Stomach (tissue), 19 donors: ENCODE measurements at regions of chr2 and their contacts with region 1.

Region 1: DNA sequence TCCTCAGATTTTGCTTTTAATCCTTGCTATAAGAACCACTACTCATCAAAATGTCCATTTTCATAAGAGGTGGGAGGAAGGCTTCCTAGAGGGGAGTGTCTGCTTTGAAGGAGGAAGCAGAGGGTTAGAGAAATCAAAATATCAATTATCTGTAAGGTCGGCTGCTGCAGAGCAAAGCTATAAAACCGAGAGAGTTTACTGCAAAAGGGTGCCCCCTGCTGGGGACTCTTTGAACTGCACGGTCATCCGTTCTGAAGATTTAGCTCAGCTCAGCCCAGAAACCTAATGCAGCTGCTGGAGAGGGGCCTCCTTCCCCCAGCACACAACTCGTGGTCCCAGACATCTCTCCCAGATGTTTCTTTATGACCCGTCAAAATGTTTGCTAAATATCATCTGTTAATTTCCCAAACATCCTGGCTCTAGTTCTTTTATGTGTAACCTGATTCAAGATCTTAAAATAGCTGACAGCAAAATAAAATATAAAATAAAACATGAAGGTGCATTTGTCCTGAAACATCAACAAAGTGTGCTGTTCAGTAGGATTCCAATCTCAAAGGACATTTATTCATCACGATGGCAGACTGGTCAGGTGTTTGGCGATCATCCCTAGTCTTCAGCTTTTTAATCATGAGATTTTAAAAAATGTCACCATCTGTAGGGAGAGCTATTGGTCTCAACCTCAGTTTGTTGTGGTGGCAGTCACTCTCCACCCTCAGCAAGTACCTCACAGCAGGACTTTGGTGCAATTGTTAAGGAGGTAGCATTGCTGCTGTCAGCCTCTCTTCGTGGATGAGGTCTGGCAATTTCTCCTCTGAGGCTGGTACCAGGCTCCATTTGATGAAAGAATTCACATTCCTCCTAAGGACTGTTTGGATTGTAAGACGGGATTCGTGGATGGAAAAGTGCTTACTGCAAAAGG is 185.9 kb downstream of the MTX2 start:
- DNase-seq: peak; percentile 87 to 91
- H3K4me3 ChIP-seq: no peak overlapping the region
- H3K27ac ChIP-seq: peak overlapping the region in 3 of 5 donors; percentile 19 to 68 (median 47)
- H3K4me1 ChIP-seq: peaks cover 0 to 11% (median 3%) of the 10 kb centered on the region in 4 donors
- H3K27me3 ChIP-seq: peaks cover 0 to 60% (median 4%) of the 10 kb centered on the region in 3 donors
- CTCF ChIP-seq: peak in 5 of 7 experiments; percentile 46 to 97 (median 94)
- EP300 ChIP-seq: no peak
- POLR2A ChIP-seq: no peak

Region 2: DNA sequence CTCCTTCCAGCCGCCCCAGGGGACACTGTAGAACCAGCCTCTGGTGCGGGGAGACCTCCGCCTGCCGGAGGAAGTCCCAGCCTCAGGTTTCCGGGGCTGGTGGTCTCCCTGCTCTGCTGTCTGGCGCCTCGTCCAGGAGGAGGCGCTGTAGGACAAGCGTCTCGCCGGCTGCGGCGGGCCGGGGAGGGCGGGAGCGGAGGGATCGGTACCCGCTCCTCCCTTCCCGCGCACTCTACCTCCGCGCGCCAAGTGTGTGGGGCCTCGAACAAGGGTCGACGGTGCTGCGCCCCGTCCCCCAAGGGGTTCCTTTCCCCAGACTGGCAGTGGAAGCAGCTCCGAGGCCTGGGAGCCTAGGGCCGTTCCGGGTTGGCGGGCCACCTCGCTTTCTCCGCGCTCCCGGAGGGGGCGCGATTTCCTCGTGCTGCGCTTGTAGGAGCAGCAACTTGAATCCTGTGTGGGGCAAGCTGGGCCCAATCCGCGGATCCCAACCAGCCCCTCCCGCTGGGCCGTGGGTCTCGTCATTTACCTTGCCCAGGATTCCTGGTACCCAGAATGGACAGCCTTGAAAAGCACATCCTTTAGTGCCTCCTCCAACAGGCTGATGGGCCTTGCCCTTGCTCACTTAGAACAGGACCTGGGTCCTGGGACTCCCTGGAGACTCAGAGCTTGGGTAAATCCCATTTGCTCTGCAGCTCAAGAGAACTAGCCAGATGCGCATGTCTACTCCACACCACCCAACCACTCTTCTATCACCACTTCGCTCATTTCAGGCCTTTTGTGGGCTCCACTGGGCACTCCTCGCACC is 314.4 kb before region 1 on chr2:
- intact Hi-C with region 1: loop called (anchors 5 kb)
- DNase-seq: peak; percentile 56 to 92
- H3K4me3 ChIP-seq: peak overlapping the region; percentile 36 to 52 (median 42)
- H3K27ac ChIP-seq: peak overlapping the region in 3 of 5 donors; percentile 1 to 49 (median 32)
- H3K4me1 ChIP-seq: peaks cover 11 to 39% (median 27%) of the 10 kb centered on the region in 4 donors
- H3K27me3 ChIP-seq: peaks cover 15 to 99% (median 86%) of the 10 kb centered on the region in 3 donors
- CTCF ChIP-seq: peak in 5 of 7 experiments; percentile 67 to 81 (median 73)
- EP300 ChIP-seq: no peak
- POLR2A ChIP-seq: no peak

Region 3: DNA sequence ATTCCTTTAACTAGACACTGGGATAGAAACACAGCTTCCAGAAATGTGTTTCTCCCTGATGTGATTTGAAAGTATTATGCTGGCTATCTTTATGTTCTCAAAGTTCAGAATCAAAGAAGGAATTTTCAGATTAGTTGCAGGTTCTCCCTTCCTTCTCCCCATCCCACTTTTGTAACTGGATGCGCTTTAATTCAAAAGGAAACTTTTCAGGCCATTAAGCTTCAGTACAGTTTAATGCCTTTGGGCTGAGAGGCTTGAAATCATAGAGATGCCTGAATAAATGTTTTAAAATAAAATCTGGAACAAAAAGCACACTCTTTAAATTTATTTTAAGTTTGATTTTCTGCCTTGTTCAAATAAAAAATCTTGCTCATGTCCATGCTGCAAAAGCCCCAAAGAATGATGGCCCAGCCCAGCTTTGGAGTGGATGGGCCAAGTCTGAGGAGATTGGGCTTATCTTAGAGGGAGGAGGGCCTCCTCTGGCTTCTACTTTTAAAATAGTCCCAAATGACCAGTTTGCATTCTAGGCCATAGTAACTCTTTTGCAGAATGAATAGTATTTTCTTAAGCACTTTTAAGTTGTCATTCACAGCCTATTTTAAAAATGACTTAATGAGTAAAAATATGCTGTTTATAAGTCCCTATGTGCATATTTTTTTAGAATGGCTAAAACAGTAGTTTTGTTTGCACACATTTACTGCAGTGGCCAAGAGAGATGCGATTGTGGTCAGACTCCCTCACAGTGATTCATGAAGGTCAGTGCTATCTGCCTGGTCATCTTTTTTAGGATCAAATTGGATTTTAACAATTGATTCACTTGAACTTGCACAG is 56.7 kb before region 1 on chr2:
- intact Hi-C with region 1: no loop called
- DNase-seq: no peak
- H3K4me3 ChIP-seq: no peak overlapping the region
- H3K27ac ChIP-seq: no peak overlapping the region
- H3K4me1 ChIP-seq: no peaks in the 10 kb centered on the region
- H3K27me3 ChIP-seq: no peaks in the 10 kb centered on the region
- CTCF ChIP-seq: no peak
- EP300 ChIP-seq: no peak
- POLR2A ChIP-seq: no peak

Region 4: GRCh38 chr2:176544991-176545956 is 90.1 kb after region 1 on chr2:
- intact Hi-C with region 1: loop called (anchors 10 kb)
- DNase-seq: no peak
- H3K4me3 ChIP-seq: no peak overlapping the region
- H3K27ac ChIP-seq: no peak overlapping the region
- H3K4me1 ChIP-seq: no peaks in the 10 kb centered on the region
- H3K27me3 ChIP-seq: peaks cover 0 to 16% (median 0%) of the 10 kb centered on the region in 3 donors
- CTCF ChIP-seq: no peak
- EP300 ChIP-seq: no peak
- POLR2A ChIP-seq: no peak